H1 (cell line): ENCODE measurements at regions of chr12 and their contacts with region 1.

Region 1: DNA sequence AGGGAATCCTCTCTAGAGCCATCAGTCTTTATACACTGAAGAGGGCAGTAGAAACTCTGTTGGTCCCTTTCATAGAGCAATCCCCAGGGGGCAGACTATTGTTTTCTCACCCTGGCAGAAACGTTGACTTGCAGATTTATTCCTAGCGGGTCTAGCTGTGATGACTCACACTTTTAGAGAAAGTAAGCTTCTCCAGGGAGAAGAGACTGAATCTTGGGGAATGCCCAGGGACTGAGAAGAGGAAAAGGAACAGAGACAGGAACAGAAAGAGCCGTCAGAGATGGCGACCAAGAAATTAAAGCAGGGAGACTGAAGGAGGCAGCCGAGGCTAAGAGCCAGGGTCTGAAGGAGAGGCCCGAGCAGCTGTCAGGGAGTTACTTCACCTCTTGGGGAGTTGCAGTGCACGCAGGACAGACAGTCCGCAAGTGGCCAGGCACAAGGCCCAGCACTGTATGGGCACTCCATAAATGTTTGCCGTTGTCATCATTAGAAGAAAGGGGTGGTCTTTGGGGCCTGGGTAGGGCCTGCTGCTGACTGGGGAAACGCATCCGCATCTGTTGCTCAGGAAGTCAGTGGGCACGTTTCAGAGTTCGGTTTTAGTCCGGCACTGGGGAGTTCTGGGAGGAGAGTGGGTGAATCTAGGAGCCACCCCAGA is 13.0 kb downstream of the PLEKHG6 start:
- DNase-seq: peak in 1 of 2 experiments; percentile 72
- H3K4me3 ChIP-seq: peak overlapping the region in 2 of 4 experiments; percentile 6 to 48; a peak in 3 of 8 replicates
- H3K27ac ChIP-seq: peak overlapping the region; percentile 89
- H3K4me1 ChIP-seq: peaks cover 13 to 41% (median 29%) of the 10 kb centered on the region in 4 experiments
- H3K27me3 ChIP-seq: no peaks in the 10 kb centered on the region
- CTCF ChIP-seq: peak in 2 of 3 experiments; percentile 19 to 40; a peak in 3 of 4 replicates
- EP300 ChIP-seq: 0 out of 3 replicates have a peak, but pooled peaks of 1 of the 2 experiments have one; percentile 45
- POLR2A ChIP-seq: peak in 1 of 2 experiments; percentile 38; a peak in 1 of 3 replicates
- RAD21 ChIP-seq: peak in 1 of 2 experiments; percentile 37; a peak in 2 of 4 replicates

Region 2: DNA sequence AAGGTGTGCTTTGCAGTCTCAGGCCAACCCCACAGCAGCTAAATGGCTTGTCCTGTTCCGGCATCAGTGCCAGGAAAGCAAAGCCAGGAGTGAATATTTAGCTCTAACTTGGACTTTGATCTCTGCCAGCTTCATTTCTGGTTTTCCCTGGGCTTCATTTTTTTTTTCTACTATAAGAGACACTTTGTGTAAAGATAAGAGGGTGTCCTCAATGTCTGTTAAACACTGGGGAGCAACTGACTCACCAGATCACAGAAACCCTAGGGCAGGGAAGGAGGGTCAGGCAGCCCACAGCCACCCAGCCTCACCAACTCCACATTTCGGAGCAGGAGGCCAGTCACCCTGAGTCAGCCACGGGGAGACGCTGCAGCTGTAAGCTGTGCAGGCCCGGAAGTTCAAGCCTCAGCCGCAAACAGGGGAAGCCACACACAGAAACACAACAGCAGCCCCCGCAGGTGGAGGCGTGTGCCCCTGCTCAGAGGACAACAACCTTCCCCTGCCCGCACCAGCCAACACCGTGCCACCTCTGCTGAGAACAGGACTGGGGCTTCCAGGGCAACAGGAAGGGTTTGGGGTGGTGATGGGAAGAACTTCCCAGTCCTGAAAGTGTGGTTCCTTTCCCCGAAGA is 12.1 kb after region 1 on chr12:
- CTCF ChIA-PET with region 1: interaction called, 109 read pairs
- POLR2A ChIA-PET with region 1: interaction called, 286 read pairs
- DNase-seq: peak in 1 of 2 experiments; percentile 70
- H3K4me3 ChIP-seq: peak overlapping the region in 3 of 4 experiments; percentile 5 to 51 (median 37); a peak in 4 of 8 replicates
- H3K27ac ChIP-seq: peak overlapping the region; percentile 88
- H3K4me1 ChIP-seq: peaks cover 19 to 48% (median 29%) of the 10 kb centered on the region in 4 experiments
- H3K27me3 ChIP-seq: no peaks in the 10 kb centered on the region
- CTCF ChIP-seq: peak in 2 of 3 experiments; percentile 48 to 53; a peak in 3 of 4 replicates
- EP300 ChIP-seq: no peak
- POLR2A ChIP-seq: no peak
- RAD21 ChIP-seq: peak; percentile 45 to 64

Region 3: GRCh38 chr12:6361834-6362782 is 38.6 kb after region 1 on chr12:
- CTCF ChIA-PET with region 1: interaction called, 32 read pairs
- POLR2A ChIA-PET with region 1: interaction called, 214 read pairs
- DNase-seq: no peak
- H3K4me3 ChIP-seq: no peak overlapping the region
- H3K27ac ChIP-seq: no peak overlapping the region
- H3K4me1 ChIP-seq: peaks cover 0 to 3% (median 1%) of the 10 kb centered on the region in 4 experiments; a peak in 3 of 7 replicates
- H3K27me3 ChIP-seq: no peaks in the 10 kb centered on the region
- CTCF ChIP-seq: no peak
- EP300 ChIP-seq: no peak
- POLR2A ChIP-seq: no peak
- RAD21 ChIP-seq: no peak

Region 4: GRCh38 chr12:6383572-6384498 is 60.4 kb after region 1 on chr12 and contains the start of gene LTBR:
- CTCF ChIA-PET with region 1: interaction called, 17 read pairs
- POLR2A ChIA-PET with region 1: interaction called, 214 read pairs
- DNase-seq: peak in 1 of 2 experiments; percentile 85
- H3K4me3 ChIP-seq: peak within 1 kb of the TSS in 1 of 4 experiments; percentile 37; a peak in 2 of 8 replicates
- H3K27ac ChIP-seq: no peak within 1 kb of the TSS
- H3K4me1 ChIP-seq: peaks cover 0 to 27% (median 20%) of the 10 kb centered on the region in 4 experiments; a peak in 6 of 7 replicates
- H3K27me3 ChIP-seq: peaks cover 0 to 26% (median 20%) of the 10 kb centered on the region in 4 experiments; a peak in 6 of 7 replicates
- CTCF ChIP-seq: 0 out of 4 replicates have a peak, but pooled peaks of 1 of the 3 experiments have one; percentile 3
- EP300 ChIP-seq: no peak
- POLR2A ChIP-seq: no peak; a peak in 1 of 3 replicates
- RAD21 ChIP-seq: peak in 1 of 2 experiments; percentile 11; a peak in 1 of 4 replicates
- total RNA-seq, gene LTBR: 6.3 and 6.7 TPM in 2 replicates

Region 5: GRCh38 chr12:6407236-6407954 is 83.9 kb after region 1 on chr12:
- CTCF ChIA-PET with region 1: no interaction called
- POLR2A ChIA-PET with region 1: no interaction called
- DNase-seq: no peak
- H3K4me3 ChIP-seq: no peak overlapping the region
- H3K27ac ChIP-seq: no peak overlapping the region
- H3K4me1 ChIP-seq: no peaks in the 10 kb centered on the region
- H3K27me3 ChIP-seq: no peaks in the 10 kb centered on the region
- CTCF ChIP-seq: no peak
- EP300 ChIP-seq: no peak
- POLR2A ChIP-seq: no peak
- RAD21 ChIP-seq: no peak

Region 6: DNA sequence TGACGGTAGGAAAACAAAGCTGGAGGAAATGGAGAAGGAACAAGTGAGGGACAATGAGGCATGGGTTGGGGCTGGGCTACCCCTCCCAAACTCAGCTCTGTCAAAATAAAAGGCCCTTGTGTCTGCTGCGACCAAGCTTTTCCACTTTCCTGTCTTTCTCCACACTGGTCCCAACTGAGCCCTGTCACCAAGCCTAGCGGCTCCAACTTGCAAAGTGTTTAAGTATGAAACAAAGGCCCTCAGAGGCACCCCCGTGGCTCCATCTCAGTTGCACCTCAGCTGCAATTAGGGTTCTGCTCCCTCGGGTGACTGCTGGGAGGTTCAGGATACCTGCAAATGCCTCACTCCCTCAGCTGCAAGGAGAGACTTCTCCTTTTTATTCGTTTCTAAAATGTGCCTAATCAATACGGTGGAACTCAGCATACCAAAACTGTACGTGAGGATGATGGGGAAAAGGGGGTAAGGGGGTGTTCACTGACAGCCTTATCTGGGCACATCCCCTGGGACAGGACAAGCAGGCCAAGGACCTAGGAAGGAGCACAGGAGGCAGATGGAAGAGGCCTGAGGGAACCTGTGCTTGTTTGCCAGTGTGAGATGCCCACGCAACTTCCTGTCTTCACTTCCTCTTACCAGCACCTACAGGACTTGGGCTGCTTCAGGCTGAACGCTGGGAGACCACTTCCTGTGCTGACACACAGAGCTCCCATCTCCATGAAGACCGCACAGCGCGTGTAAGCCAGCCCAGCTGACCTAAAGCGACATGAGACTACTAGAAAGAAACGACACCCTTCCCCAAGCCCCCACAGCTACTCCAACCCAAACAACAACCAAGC is 138.2 kb after region 1 on chr12:
- CTCF ChIA-PET with region 1: interaction called, 107 read pairs
- POLR2A ChIA-PET with region 1: interaction called, 7 read pairs
- DNase-seq: no peak
- H3K4me3 ChIP-seq: no peak overlapping the region
- H3K27ac ChIP-seq: no peak overlapping the region
- H3K4me1 ChIP-seq: no peaks in the 10 kb centered on the region
- H3K27me3 ChIP-seq: no peaks in the 10 kb centered on the region
- CTCF ChIP-seq: no peak
- EP300 ChIP-seq: no peak
- POLR2A ChIP-seq: no peak
- RAD21 ChIP-seq: no peak

Region 7: GRCh38 chr12:6524648-6525047 is 201.2 kb after region 1 on chr12:
- CTCF ChIA-PET with region 1: no interaction called
- POLR2A ChIA-PET with region 1: no interaction called
- DNase-seq: no peak
- H3K4me3 ChIP-seq: no peak overlapping the region
- H3K27ac ChIP-seq: no peak overlapping the region
- H3K4me1 ChIP-seq: peaks cover 0 to 1% (median 0%) of the 10 kb centered on the region in 4 experiments; a peak in 1 of 7 replicates
- H3K27me3 ChIP-seq: no peaks in the 10 kb centered on the region
- CTCF ChIP-seq: no peak
- EP300 ChIP-seq: no peak
- POLR2A ChIP-seq: no peak
- RAD21 ChIP-seq: no peak

Region 8: GRCh38 chr12:7039403-7039802 is 715.9 kb after region 1 on chr12:
- CTCF ChIA-PET with region 1: no interaction called
- POLR2A ChIA-PET with region 1: no interaction called
- DNase-seq: no peak
- H3K4me3 ChIP-seq: no peak overlapping the region
- H3K27ac ChIP-seq: no peak overlapping the region
- H3K4me1 ChIP-seq: peaks cover 0 to 4% (median 1%) of the 10 kb centered on the region in 4 experiments; a peak in 2 of 7 replicates
- H3K27me3 ChIP-seq: no peaks in the 10 kb centered on the region
- CTCF ChIP-seq: no peak
- EP300 ChIP-seq: no peak
- POLR2A ChIP-seq: no peak
- RAD21 ChIP-seq: no peak